Sciatic nerve (tissue), 2 donors: ENCODE measurements at regions of chr14 and their contacts with region 1.

Region 1: DNA sequence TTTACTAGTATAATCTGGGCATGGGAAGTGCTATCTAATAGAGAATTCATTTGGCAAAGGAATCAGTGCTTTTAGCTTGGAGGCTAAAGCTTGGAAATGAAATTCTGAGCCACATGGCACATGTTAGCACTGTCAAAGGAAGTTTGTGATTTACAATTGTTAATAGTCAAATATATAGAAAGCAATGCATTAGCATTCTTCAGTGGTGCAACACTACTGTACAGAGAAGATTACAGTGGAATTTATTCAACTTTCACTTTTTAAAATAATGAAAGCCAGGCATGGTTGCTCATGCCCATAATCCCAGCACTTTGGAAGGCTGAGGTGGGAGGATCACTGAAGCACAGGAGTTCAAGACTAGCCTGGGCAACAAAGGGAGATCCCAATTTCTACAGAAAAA is 45.9 kb downstream of the PAX9 start:
- DNase-seq: no peak
- ATAC-seq: no peak

Region 2: GRCh38 chr14:35247777-35248475 is 1459.6 kb before region 1 on chr14:
- intact Hi-C with region 1: no loop called
- DNase-seq: no peak
- ATAC-seq: no peak

Region 3: DNA sequence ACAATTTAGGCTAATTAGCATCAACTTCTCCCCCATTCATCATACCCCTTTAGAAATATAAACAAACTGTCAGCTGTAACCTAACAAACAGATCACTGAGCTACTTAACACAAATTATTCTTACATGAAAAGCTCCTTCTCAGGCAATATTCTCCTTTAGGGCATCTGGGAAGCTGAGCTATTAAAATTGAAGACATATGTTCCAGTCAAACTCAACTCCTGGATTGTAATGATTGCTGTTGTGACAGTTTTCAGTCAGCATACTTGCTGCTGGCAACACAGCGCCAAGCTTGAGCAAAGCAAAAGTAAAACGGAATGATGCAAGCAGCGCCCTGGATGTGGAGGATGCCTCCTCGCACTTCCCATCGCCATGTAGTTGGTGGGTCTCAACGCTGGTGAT is 382.5 kb after region 1 on chr14:
- intact Hi-C with region 1: no loop called
- DNase-seq: no peak
- ATAC-seq: no peak

Region 4: DNA sequence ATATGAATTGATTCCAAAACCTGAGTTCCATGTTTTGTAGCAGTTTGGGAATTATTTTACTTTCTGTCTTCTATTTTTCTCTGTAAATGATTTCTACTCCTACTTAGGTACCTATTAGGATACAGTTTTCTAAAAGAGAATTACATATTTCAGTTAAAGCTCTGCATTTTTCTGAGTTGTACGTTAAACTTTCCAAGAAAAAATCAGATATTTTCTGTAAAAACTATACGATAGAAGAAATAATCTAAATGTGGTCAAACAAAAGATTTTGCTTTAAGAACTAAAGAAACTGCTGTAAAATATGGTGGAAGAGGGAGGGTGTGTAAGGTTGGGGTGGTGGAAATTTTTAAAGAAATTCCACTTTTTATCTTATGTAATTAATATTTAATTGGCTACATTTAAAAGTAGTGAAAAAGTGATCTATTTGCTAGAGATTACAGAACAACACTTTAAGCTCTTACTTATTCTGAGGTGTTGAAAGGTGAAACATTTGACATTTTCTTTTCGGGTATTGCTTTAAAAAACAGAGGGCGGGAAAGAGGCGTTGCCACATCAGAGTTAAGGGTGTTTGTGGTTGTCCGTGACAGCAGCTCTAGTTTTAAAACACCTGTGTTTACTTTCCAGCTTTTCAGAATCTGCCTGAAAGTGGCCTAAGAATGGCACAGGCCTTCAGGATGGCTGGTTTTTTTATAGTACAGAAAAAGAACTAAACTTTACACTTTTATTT is 677.5 kb after region 1 on chr14:
- intact Hi-C with region 1: loop called (anchors 5 kb)
- DNase-seq: no peak
- ATAC-seq: no peak

Region 5: DNA sequence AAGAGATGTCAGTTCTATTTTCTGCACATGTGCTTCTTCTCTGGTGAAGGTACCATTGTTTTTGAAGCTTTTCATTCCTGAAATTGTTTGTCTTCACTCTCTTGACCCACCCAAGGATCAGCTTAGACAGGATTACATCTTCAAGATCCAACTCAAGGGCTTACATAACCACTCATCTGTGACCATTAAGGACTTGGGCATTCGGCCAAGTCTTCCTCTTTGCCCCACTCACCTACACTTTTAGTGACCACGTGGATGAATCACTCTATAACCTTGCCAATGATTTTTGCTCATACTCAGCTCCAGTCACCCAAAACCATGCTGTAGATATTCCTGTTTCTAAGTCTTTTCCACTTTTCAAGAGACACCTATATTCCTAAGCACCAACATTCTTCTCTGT is 1463.6 kb after region 1 on chr14:
- intact Hi-C with region 1: no loop called
- DNase-seq: no peak
- ATAC-seq: no peak